ENCODE measurements at regions of chr6 and their contacts with region 1.

Region 1: DNA sequence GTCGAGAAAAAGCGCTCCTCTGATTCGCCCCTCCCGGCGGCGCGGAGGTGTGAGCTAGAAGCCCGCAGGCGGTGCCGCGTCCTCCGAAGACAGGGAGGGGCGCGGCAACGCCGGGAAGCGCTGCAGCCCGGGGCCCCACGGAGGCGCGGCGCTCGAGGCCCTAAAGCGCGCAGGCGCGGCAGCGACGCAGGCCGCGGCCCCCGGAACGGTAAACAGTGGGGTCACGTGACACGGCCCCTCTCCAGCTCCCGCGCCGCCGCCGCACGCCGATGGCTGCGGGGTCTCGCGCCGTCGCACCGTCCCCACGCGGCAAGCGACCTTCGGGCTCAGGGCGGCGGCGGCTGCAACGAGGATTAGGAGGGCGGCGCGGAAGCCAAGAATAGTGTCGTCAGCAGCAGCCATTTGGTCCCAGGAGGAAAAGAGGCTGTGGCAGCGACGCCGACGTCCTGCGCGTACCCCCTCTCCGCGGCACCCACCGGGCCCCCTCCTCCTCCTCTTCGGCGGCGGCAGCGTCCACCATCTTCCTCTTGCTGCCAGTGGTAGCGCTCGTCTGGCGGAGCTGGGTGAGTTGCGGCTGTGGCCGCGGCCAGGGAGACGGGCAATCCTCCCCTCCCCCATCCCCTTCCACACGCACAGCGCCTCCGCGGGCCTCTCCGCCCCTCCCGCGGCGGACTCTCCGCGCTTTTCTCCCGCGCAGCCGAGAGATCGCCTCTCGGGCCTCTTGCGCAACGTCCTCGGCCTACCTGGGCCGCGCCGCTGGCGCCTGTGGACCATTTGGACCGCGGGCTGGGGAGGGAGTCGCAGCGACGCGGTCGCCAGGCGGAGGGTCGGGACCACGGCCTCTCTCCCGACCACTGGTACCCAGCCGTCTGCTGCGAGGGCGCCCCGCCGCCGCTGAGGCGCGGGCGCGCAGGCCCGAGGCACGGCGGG is at the start of gene PHF3:
- DNase-seq: peak; percentile 88
- H3K4me3 Mint-ChIP-seq: peak within 1 kb of the TSS; percentile 100
- H3K27ac Mint-ChIP-seq: peak within 1 kb of the TSS; percentile 99
- H3K4me1 Mint-ChIP-seq: peaks cover 40% of the 10 kb centered on the region
- H3K27me3 Mint-ChIP-seq: peaks cover under 1% of the 10 kb centered on the region
- total RNA-seq, gene PHF3: 44.6 and 44.7 TPM in 2 replicates

Region 2: GRCh38 chr6:63527658-63528514 is 108.0 kb before region 1 on chr6:
- intact Hi-C with region 1: loop called (anchors 5 kb)
- DNase-seq: no peak
- H3K4me3 Mint-ChIP-seq: no peak overlapping the region
- H3K27ac Mint-ChIP-seq: peak overlapping the region; percentile 62
- H3K4me1 Mint-ChIP-seq: peaks cover 49% of the 10 kb centered on the region
- H3K27me3 Mint-ChIP-seq: no peaks in the 10 kb centered on the region

Region 3: DNA sequence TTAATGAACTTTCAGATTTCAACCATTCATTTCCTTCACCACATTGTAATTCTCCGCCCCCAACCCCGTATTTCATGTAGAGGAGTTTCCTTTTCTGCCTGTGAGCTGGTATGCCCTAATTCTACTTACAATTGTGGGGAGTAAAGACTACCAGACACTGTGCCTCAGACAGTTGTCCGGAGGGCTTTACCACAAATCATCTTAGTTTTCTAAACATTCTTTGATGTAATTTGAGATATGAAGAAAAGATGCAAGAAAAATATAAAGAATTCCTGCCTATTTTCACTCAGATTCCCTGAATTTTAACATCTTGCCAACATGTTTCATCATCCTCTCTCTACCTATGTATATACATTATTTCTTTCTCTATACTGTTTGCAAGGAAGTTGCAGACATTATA is 91.9 kb before region 1 on chr6:
- intact Hi-C with region 1: no loop called
- DNase-seq: no peak
- H3K4me3 Mint-ChIP-seq: no peak overlapping the region
- H3K27ac Mint-ChIP-seq: no peak overlapping the region
- H3K4me1 Mint-ChIP-seq: peaks cover 11% of the 10 kb centered on the region
- H3K27me3 Mint-ChIP-seq: peaks cover 34% of the 10 kb centered on the region

Region 4: GRCh38 chr6:63598049-63599036 is 37.5 kb before region 1 on chr6:
- intact Hi-C with region 1: loop called (anchors 1 kb)
- DNase-seq: peak; percentile 64
- H3K4me3 Mint-ChIP-seq: peak overlapping the region; percentile 86
- H3K27ac Mint-ChIP-seq: no peak overlapping the region
- H3K4me1 Mint-ChIP-seq: peaks cover 26% of the 10 kb centered on the region
- H3K27me3 Mint-ChIP-seq: peaks cover 8% of the 10 kb centered on the region

Region 5: DNA sequence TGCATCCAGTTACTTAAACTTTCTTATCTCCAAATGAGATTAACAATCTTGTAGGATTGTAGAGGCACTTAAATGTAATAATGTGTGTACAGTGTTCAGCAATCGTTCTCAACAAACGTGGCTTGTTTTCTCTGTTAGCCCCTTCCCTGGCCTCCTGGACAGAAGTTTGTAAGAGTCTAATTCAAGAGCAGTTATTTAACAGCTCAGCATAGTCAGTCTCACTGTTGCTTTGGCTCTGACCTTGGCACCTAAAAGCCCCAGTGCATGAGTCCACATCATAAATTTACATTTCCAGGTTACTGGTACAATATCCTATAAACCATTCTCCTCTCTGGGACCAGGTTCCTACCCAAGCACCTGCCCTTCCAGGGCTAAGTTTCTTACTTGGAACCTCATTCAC is 11.8 kb before region 1 on chr6:
- intact Hi-C with region 1: no loop called
- DNase-seq: no peak
- H3K4me3 Mint-ChIP-seq: no peak overlapping the region
- H3K27ac Mint-ChIP-seq: no peak overlapping the region
- H3K4me1 Mint-ChIP-seq: no peaks in the 10 kb centered on the region
- H3K27me3 Mint-ChIP-seq: peaks cover 30% of the 10 kb centered on the region

Region 6: DNA sequence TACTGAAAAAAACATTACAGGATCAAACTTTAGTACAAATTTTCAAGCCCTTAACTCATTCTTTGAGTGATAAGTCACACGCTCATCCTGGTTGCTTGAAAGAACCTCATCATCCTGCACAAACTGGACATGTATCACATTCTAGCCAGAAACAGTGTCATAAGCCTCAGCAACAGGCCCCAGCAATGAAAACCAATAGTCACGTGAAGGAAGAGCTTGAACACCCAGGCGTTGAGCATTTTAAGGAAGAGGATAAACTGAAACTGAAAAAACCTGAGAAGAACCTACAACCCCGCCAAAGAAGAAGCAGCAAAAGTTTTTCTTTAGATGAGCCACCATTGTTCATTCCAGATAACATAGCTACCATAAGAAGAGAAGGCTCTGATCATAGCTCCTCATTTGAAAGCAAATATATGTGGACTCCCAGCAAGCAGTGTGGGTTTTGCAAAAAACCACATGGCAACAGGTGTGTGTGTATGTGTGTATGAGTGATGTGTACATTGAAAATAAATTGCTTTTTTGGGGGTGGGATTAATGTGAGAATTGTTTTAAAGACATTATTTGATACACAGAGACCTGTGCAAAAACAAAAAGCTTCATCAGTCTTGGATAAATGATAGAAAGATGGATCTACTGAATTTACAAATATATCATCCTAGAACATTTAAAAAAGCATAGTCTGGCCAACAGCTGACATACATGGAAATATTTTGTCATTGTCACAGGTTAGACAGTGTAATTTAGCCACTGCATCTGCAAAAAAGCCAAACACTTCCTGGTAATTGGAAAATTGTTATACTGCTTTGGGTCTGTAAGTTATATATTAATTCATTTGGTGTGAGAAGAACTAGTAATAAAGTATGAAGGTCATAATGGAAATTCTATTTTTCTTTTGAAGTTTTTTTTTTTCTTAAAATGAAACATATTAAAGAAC is 49.9 kb after region 1 on chr6:
- intact Hi-C with region 1: loop called (anchors 5 kb)
- DNase-seq: no peak
- H3K4me3 Mint-ChIP-seq: no peak overlapping the region
- H3K27ac Mint-ChIP-seq: peak overlapping the region; percentile 47
- H3K4me1 Mint-ChIP-seq: peaks cover 24% of the 10 kb centered on the region
- H3K27me3 Mint-ChIP-seq: no peaks in the 10 kb centered on the region